PC-3 (cell line): ENCODE measurements at regions of chr10 and their contacts with region 1.

Region 1: DNA sequence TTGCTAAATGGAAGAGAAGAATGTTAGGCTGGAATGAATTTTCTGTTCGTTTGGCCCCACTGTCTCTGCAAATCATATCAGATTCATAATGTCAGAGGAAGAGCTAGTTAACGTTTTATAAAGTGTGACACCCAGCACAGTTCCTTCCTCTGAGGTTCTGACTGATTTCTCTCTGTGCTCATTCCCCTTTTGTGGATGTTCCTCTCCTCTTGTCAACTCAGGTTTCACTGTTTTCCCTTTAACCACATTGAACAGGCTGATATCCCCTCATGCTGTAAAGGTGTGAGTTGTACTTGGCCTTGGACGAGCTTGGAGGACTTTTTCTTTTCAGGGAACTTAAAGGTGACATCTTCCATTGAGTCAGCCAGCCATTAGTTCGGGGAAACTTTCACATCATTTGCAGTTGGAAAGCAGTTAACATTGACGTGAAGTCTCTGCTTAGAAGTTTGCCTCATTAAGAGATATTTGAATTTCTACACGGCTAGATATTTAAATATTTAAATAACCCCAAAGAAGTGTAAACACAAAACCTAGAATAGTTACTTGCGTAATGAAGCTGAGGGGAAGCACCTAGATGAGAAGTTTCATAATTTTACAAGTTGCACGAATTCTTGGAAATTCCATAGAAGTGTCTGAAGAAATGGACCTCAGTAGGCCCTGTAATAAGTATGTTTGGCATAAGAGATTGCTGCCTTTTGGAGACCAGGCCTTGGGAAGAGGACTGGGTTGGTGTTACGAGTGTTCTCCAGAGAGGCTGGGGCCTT is 101.5 kb upstream of the EGR2 start:
- DNase-seq: no peak
- ATAC-seq: no peak
- H3K4me3 ChIP-seq: no peak overlapping the region
- H3K27ac ChIP-seq: peak overlapping the region; percentile 75
- H3K4me1 ChIP-seq: peaks cover 65% of the 10 kb centered on the region
- H3K27me3 ChIP-seq: no peaks in the 10 kb centered on the region
- CTCF ChIP-seq: no peak

Region 2: GRCh38 chr10:62511656-62512055 is 406.0 kb before region 1 on chr10:
- CTCF ChIA-PET with region 1: no interaction called
- POLR2A ChIA-PET with region 1: no interaction called
- intact Hi-C with region 1: no loop called
- DNase-seq: no peak
- ATAC-seq: no peak
- H3K4me3 ChIP-seq: no peak overlapping the region
- H3K27ac ChIP-seq: no peak overlapping the region
- H3K4me1 ChIP-seq: peaks cover 14% of the 10 kb centered on the region
- H3K27me3 ChIP-seq: no peaks in the 10 kb centered on the region
- CTCF ChIP-seq: no peak

Region 3: DNA sequence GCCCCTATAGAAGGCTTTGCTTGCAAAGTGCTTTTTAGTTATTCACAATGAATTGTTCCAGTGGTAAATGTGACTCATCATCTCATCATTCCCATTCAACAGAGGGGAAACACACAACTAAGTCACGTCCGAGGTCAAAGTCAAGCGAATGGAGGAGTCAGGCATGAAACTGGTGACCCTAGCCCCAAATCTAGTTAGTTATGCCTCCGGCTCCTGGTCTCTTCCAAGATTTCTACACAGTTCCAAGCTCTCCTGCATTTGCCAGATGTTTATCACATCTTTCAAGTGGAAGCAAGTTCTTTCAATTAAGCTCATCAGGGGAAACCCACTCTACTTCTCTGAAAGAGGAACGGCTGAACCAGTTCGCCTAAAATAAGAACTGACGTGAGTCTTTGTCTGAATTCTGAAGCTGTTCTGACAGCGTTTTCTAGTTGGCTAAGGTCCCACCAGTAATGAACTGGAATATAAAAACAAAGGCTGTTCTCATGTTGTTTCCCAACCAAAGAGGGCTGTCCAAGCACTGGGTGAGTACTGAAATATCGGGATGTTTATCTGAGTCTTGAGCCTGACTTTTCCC is 74.6 kb after region 1 on chr10:
- CTCF ChIA-PET with region 1: no interaction called
- POLR2A ChIA-PET with region 1: no interaction called
- intact Hi-C with region 1: loop called (anchors 2 kb)
- DNase-seq: peak; percentile 100
- ATAC-seq: peak; percentile 72
- H3K4me3 ChIP-seq: peak overlapping the region; percentile 45
- H3K27ac ChIP-seq: peak overlapping the region; percentile 76
- H3K4me1 ChIP-seq: peaks cover 72% of the 10 kb centered on the region
- H3K27me3 ChIP-seq: no peaks in the 10 kb centered on the region
- CTCF ChIP-seq: no peak